Sigmoid colon (tissue), 7 donors: ENCODE measurements at regions of chr6 and their contacts with region 1.

Region 1: DNA sequence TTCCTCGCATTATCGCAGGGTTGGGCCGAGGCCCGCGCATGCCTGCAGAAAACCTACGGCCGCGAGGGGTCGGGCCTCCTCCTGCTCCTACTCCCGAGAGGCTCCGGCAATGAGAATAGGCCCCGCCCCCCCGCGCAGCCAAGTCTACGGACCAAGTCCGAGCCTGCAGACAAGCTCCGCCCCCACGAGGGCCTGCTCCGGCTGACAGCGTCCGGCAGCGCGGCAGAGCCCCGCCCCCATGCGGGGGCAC is 3.1 kb upstream of the GPSM3 start:
- DNase-seq: peak; percentile 100
- H3K4me3 ChIP-seq: peak overlapping the region; percentile 68 to 91 (median 82)
- H3K27ac ChIP-seq: peak overlapping the region; percentile 93 to 100 (median 100)
- H3K4me1 ChIP-seq: peaks cover 0 to 36% (median 32%) of the 10 kb centered on the region in 4 donors
- H3K27me3 ChIP-seq: no peaks in the 10 kb centered on the region
- CTCF ChIP-seq: peak in 3 of 4 experiments; percentile 15 to 42 (median 26)
- EP300 ChIP-seq: no peak
- POLR2A ChIP-seq: no peak

Region 2: GRCh38 chr6:31971993-31972708 is 223.4 kb before region 1 on chr6 and contains the start of gene DXO:
- intact Hi-C with region 1: loop called (anchors 10 kb)
- DNase-seq: peak; percentile 99
- H3K4me3 ChIP-seq: peak within 1 kb of the TSS; percentile 50 to 81 (median 65)
- H3K27ac ChIP-seq: peak within 1 kb of the TSS; percentile 93 to 96 (median 94)
- H3K4me1 ChIP-seq: peaks cover 0 to 36% (median 29%) of the 10 kb centered on the region in 4 donors
- H3K27me3 ChIP-seq: no peaks in the 10 kb centered on the region
- CTCF ChIP-seq: no peak
- EP300 ChIP-seq: peak in 2 of 4 donors; percentile 47 to 55
- POLR2A ChIP-seq: peak in 1 of 2 donors; percentile 35
- total RNA-seq, gene DXO: 11.4 to 22.7 (median 18.3) TPM

Region 3: GRCh38 chr6:32153564-32154513 is 41.7 kb before region 1 on chr6 and contains the start of gene PPT2:
- intact Hi-C with region 1: loop called (anchors 5 kb)
- DNase-seq: peak; percentile 98
- H3K4me3 ChIP-seq: peak within 1 kb of the TSS; percentile 61 to 80 (median 78)
- H3K27ac ChIP-seq: peak within 1 kb of the TSS; percentile 88 to 93 (median 92)
- H3K4me1 ChIP-seq: peaks cover 0 to 59% (median 49%) of the 10 kb centered on the region in 4 donors
- H3K27me3 ChIP-seq: no peaks in the 10 kb centered on the region
- CTCF ChIP-seq: peak in 2 of 4 experiments; percentile 13 to 19
- EP300 ChIP-seq: peak in 2 of 4 donors; percentile 2 to 91
- POLR2A ChIP-seq: peak in 1 of 2 donors; percentile 47
- total RNA-seq, gene PPT2: 15.5 to 126 (median 62.7) TPM

Region 4: DNA sequence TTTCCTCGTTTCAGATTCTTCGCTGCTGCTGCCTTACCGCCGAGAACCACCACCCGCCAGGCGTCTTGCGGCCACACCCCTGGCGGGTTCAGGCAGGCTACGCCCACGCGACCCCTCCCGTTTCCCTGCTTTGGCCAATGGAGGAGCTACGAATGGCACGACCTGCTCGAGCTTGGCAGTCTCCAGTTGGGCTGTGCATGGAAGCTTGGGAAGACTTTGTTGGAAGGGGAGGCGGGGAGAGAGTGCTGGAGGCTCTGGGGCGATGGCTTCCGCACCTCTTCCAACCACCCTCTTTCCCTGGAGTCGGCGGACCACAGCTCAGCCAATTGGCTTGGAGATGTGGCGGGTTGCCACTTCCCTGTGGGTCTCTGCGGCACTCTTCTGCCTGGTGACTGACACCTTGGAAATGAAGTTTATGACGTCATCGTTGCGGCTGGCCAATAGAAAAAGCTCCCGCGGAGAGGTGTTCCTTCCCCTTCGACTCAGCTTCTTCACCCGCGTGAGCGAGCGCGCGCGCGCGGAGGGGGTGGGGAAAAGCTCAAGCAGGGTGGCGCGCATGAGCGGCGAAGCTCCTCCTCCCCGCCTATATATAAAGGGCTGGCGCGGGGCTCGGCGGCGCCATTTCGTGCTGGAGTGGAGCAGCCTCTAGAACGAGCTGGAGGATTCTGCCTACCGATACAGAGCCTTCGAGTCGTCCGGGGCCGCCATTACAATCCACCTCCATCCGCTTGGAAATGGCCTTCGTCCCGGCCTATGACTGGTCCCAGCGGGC is 776.2 kb after region 1 on chr6:
- intact Hi-C with region 1: loop called (anchors 5 kb)
- DNase-seq: peak; percentile 100
- H3K4me3 ChIP-seq: peak overlapping the region; percentile 71 to 87 (median 83)
- H3K27ac ChIP-seq: peak overlapping the region; percentile 98 to 99 (median 98)
- H3K4me1 ChIP-seq: peaks cover 0 to 41% (median 35%) of the 10 kb centered on the region in 4 donors
- H3K27me3 ChIP-seq: no peaks in the 10 kb centered on the region
- CTCF ChIP-seq: no peak
- EP300 ChIP-seq: peak in 2 of 4 donors; percentile 48 to 82
- POLR2A ChIP-seq: peak; percentile 99

Region 5: DNA sequence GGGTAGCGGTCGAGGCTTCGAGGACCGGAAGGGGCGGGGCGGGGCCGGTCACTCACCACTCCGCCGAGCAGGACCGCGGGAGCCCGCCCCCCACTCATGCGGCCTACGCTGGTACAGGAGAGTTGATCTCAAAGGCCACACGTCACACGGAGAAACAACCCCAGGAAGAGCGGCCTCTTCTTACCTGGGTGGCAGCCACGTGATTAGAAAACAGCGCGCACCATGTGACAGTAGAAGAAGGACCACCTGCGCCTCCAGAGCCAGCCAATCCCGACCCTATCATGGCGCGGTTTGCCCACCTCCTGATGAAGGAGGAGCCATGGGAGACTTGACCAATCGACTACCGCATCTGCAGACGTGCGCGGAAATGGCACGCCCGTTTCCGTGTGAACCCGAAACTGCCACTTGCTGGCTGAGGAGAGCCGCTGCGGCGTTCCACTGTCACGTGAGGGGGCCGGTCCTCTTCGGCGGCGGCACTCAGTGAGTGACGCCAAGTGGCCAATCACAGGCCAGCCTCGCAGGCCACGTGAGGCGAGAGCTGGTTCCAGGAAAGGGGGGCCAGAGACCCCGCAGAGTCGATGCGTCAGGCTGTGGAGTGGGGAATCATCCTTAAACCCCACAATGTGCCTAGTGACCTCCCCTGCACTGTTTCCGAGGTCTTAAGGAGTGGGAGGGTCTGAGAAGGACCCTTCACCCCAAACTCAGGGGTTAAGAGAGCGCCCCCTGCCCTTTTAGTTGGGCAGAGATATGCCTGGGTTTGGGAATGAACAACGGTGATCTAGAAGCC is 1222.5 kb after region 1 on chr6 and contains the start of gene CUTA:
- intact Hi-C with region 1: loop called (anchors 10 kb)
- DNase-seq: peak; percentile 100
- H3K4me3 ChIP-seq: peak within 1 kb of the TSS; percentile 59 to 76 (median 62)
- H3K27ac ChIP-seq: peak within 1 kb of the TSS; percentile 93 to 97 (median 96)
- H3K4me1 ChIP-seq: peaks cover 0 to 48% (median 42%) of the 10 kb centered on the region in 4 donors
- H3K27me3 ChIP-seq: no peaks in the 10 kb centered on the region
- CTCF ChIP-seq: peak in 1 of 4 experiments; percentile 23
- EP300 ChIP-seq: peak in 1 of 4 donors; percentile 84
- POLR2A ChIP-seq: peak; percentile 80 to 89
- total RNA-seq, gene CUTA: 102 to 148 (median 120) TPM